ENCODE measurements at regions of chr14 and their contacts with region 1.

Region 1: GRCh38 chr14:91373591-91374254 is 43.9 kb downstream of the CCDC88C start:
- DNase-seq: no peak
- H3K4me3 ChIP-seq: no peak overlapping the region
- H3K27ac ChIP-seq: no peak overlapping the region
- H3K4me1 ChIP-seq: peaks cover 6 to 61% (median 36%) of the 10 kb centered on the region in 4 experiments
- H3K27me3 ChIP-seq: no peaks in the 10 kb centered on the region
- CTCF ChIP-seq: no peak
- EP300 ChIP-seq: no peak
- POLR2A ChIP-seq: no peak
- RAD21 ChIP-seq: no peak

Region 2: DNA sequence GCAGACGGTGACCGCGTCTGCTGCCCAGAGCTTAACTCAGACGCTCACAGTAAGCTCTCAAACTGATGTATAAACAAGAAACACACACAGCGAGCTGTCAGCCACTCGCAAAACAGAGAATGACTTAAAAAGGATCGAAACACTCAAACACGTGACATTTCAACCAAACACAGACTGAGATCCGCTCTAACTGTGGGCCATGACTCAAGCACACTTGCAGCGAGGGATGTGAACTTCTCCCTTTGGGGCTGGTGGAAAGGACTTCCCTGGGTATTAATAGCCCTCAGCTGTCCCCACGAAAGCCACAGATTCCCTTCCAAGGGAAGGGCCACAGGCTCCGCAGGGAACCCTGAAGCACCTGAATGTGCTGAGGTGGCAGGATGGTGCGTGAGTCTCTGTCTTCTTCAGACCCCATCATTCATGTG is 14.8 kb after region 1 on chr14:
- CTCF ChIA-PET with region 1: interaction called, 5 read pairs
- POLR2A ChIA-PET with region 1: interaction called, 11 read pairs
- DNase-seq: no peak
- H3K4me3 ChIP-seq: no peak overlapping the region
- H3K27ac ChIP-seq: no peak overlapping the region
- H3K4me1 ChIP-seq: peaks cover 13 to 38% (median 27%) of the 10 kb centered on the region in 4 experiments
- H3K27me3 ChIP-seq: no peaks in the 10 kb centered on the region
- CTCF ChIP-seq: no peak
- EP300 ChIP-seq: no peak
- POLR2A ChIP-seq: no peak
- RAD21 ChIP-seq: no peak

Region 3: GRCh38 chr14:91418387-91419043 is 44.8 kb after region 1 on chr14:
- CTCF ChIA-PET with region 1: interaction called, 5 read pairs
- POLR2A ChIA-PET with region 1: interaction called, 12 read pairs
- DNase-seq: peak; percentile 39 to 96
- H3K4me3 ChIP-seq: peak overlapping the region; percentile 35 to 92 (median 63)
- H3K27ac ChIP-seq: no peak overlapping the region
- H3K4me1 ChIP-seq: peaks cover 7 to 26% (median 13%) of the 10 kb centered on the region in 4 experiments; a peak in 6 of 7 replicates
- H3K27me3 ChIP-seq: peaks cover 0 to 6% (median 3%) of the 10 kb centered on the region in 4 experiments; a peak in 2 of 7 replicates
- CTCF ChIP-seq: peak; percentile 90 to 92 (median 91)
- EP300 ChIP-seq: no peak
- POLR2A ChIP-seq: no peak
- RAD21 ChIP-seq: peak; percentile 90 to 91

Region 4: GRCh38 chr14:91424813-91425530 is 51.2 kb after region 1 on chr14:
- CTCF ChIA-PET with region 1: interaction called, 13 read pairs
- POLR2A ChIA-PET with region 1: no interaction called
- DNase-seq: no peak
- H3K4me3 ChIP-seq: no peak overlapping the region
- H3K27ac ChIP-seq: no peak overlapping the region
- H3K4me1 ChIP-seq: no peaks in the 10 kb centered on the region
- H3K27me3 ChIP-seq: no peaks in the 10 kb centered on the region
- CTCF ChIP-seq: no peak
- EP300 ChIP-seq: no peak
- POLR2A ChIP-seq: no peak
- RAD21 ChIP-seq: no peak

Measured in H1 (cell line).